Uterus (tissue), 4 donors: ENCODE measurements at regions of chr19 and their contacts with region 1.

Region 1: GRCh38 chr19:17159466-17160393 is 55.4 kb upstream of the USE1 start:
- DNase-seq: no peak
- H3K4me3 ChIP-seq: no peak overlapping the region
- H3K27ac ChIP-seq: no peak overlapping the region
- H3K4me1 ChIP-seq: no peaks in the 10 kb centered on the region
- H3K27me3 ChIP-seq: no peaks in the 10 kb centered on the region
- CTCF ChIP-seq: no peak
- POLR2A ChIP-seq: no peak

Region 2: GRCh38 chr19:17069218-17069617 is 90.5 kb before region 1 on chr19:
- intact Hi-C with region 1: loop called (anchors 10 kb)
- DNase-seq: no peak
- H3K4me3 ChIP-seq: no peak overlapping the region
- H3K27ac ChIP-seq: no peak overlapping the region
- H3K4me1 ChIP-seq: peaks cover 3 to 5% of the 10 kb centered on the region in 2 donors
- H3K27me3 ChIP-seq: no peaks in the 10 kb centered on the region
- CTCF ChIP-seq: no peak
- POLR2A ChIP-seq: no peak